PC-9 (cell line): ENCODE measurements at regions of chr15 and their contacts with region 1.

Region 1: DNA sequence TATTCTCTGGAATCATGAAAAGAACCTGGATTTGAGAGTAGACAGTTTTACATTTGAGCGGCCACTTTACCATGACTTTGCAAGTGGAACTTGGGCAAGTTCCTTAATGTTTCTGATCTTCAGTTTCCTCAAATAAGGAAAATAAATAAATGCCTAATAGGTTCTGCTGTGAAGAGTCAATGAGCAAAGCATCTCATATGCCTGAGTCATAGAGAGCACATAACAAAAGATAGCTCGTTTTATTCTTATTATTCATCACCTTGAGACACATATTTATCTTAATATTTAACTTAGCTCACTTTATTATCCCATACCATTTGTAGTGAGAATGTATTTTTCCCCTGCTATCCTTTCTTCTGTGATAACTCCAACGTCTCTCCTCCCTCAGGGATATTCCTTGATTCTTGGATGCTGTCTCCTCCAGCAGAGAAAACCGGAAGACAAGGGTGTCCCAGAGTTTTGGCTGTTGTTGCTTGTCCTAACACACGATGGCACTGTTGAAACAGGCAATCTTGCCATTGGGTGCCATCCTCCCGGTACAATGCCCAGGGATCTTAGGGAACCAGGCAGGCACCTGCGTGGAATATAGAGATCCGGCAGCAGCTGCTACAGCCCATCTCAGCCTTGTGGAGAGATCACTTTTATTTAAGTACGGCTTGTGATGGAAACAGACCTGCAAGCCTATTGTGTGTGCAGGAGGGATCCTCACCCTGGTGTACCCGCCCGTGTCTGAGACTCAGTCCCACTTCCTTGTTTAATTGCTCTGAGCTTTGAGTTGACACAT is 33.3 kb upstream of the VPS33B start:
- DNase-seq: peak; percentile 43 to 54
- H3K4me3 ChIP-seq: no peak overlapping the region
- H3K27ac ChIP-seq: no peak overlapping the region
- H3K4me1 ChIP-seq: no peaks in the 10 kb centered on the region
- H3K27me3 ChIP-seq: peaks cover 90% of the 10 kb centered on the region
- CTCF ChIP-seq: peak; percentile 79

Region 2: DNA sequence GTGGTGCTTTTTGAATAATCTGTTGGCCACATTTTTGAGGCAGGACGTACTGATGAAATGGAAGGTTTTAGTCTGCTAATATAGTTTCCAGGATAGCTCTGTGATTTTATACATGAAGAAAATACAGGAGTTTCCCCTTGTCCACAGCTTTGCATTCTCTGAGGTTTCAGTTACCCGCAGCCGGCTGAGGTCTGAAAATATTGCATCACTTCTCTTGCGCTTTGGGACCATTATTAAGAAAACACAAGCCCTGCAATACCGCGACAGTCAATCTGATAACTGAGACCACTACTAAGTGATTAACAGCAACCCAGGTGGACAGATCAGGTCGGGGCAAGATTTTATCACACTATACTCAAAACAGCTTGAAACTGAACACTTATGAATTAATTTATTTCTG is 305.6 kb before region 1 on chr15:
- CTCF ChIA-PET with region 1: no interaction called
- POLR2A ChIA-PET with region 1: no interaction called
- intact Hi-C with region 1: no loop called
- DNase-seq: no peak
- H3K4me3 ChIP-seq: no peak overlapping the region
- H3K27ac ChIP-seq: no peak overlapping the region
- H3K4me1 ChIP-seq: no peaks in the 10 kb centered on the region
- H3K27me3 ChIP-seq: no peaks in the 10 kb centered on the region
- CTCF ChIP-seq: no peak

Region 3: GRCh38 chr15:91192690-91193377 is 137.1 kb after region 1 on chr15:
- CTCF ChIA-PET with region 1: no interaction called
- POLR2A ChIA-PET with region 1: no interaction called
- intact Hi-C with region 1: no loop called
- DNase-seq: no peak
- H3K4me3 ChIP-seq: no peak overlapping the region
- H3K27ac ChIP-seq: no peak overlapping the region
- H3K4me1 ChIP-seq: no peaks in the 10 kb centered on the region
- H3K27me3 ChIP-seq: peaks cover 45% of the 10 kb centered on the region
- CTCF ChIP-seq: no peak

Region 4: DNA sequence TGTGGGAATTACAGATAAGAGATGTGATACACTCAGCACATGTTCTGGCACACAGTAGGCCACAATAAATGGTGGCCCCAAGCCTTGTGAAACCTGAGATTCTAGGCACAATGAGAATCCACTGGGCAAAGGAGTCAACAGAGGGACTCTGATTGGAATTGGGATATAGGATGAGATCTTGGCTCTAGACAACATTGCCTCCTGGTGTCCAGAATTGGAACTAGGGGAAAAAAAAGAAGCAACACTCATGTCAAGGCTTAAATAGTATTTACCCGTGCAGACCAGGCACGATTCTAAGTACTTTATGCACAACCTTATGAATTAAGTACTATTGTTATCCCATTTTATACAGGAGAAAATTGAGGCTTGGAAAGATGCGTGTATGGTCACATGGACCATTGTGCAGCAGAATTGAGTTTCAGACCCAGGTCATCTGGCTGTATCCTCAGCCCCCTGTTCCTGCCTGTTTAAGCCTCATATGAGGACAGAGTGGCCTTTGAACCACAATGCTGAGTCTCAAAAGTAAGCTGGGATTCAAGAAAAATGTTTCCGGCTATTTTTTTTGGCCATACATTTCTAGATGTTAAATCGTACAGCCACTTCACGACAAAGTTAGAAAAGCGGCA is 169.1 kb after region 1 on chr15:
- CTCF ChIA-PET with region 1: no interaction called
- POLR2A ChIA-PET with region 1: no interaction called
- intact Hi-C with region 1: loop called (anchors 2 kb)
- DNase-seq: no peak
- H3K4me3 ChIP-seq: no peak overlapping the region
- H3K27ac ChIP-seq: no peak overlapping the region
- H3K4me1 ChIP-seq: no peaks in the 10 kb centered on the region
- H3K27me3 ChIP-seq: peaks cover 64% of the 10 kb centered on the region
- CTCF ChIP-seq: peak; percentile 74

Region 5: GRCh38 chr15:91246998-91247397 is 191.3 kb after region 1 on chr15:
- CTCF ChIA-PET with region 1: no interaction called
- POLR2A ChIA-PET with region 1: no interaction called
- intact Hi-C with region 1: loop called (anchors 1 kb)
- DNase-seq: no peak
- H3K4me3 ChIP-seq: no peak overlapping the region
- H3K27ac ChIP-seq: no peak overlapping the region
- H3K4me1 ChIP-seq: no peaks in the 10 kb centered on the region
- H3K27me3 ChIP-seq: peaks cover 60% of the 10 kb centered on the region
- CTCF ChIP-seq: no peak

Region 6: GRCh38 chr15:91271565-91272153 is 215.9 kb after region 1 on chr15:
- CTCF ChIA-PET with region 1: interaction called, 10 read pairs
- POLR2A ChIA-PET with region 1: no interaction called
- intact Hi-C with region 1: loop called (anchors 1 kb)
- DNase-seq: peak in 1 of 2 experiments; percentile 34
- H3K4me3 ChIP-seq: no peak overlapping the region
- H3K27ac ChIP-seq: no peak overlapping the region
- H3K4me1 ChIP-seq: no peaks in the 10 kb centered on the region
- H3K27me3 ChIP-seq: peaks cover 15% of the 10 kb centered on the region; the same call in 1 of the 2 replicates
- CTCF ChIP-seq: peak; percentile 87

Region 7: GRCh38 chr15:91385311-91385710 is 329.6 kb after region 1 on chr15:
- CTCF ChIA-PET with region 1: no interaction called
- POLR2A ChIA-PET with region 1: interaction called, 12 read pairs
- intact Hi-C with region 1: no loop called
- DNase-seq: peak in 1 of 2 experiments; percentile 69
- H3K4me3 ChIP-seq: no peak overlapping the region
- H3K27ac ChIP-seq: peak overlapping the region; percentile 39; the same call in 1 of the 2 replicates
- H3K4me1 ChIP-seq: peaks cover 10% of the 10 kb centered on the region; the same call in 1 of the 2 replicates
- H3K27me3 ChIP-seq: no peaks in the 10 kb centered on the region
- CTCF ChIP-seq: no peak